Thyroid gland (tissue), 4 donors: ENCODE measurements at regions of chr19 and their contacts with region 1.

Region 1: DNA sequence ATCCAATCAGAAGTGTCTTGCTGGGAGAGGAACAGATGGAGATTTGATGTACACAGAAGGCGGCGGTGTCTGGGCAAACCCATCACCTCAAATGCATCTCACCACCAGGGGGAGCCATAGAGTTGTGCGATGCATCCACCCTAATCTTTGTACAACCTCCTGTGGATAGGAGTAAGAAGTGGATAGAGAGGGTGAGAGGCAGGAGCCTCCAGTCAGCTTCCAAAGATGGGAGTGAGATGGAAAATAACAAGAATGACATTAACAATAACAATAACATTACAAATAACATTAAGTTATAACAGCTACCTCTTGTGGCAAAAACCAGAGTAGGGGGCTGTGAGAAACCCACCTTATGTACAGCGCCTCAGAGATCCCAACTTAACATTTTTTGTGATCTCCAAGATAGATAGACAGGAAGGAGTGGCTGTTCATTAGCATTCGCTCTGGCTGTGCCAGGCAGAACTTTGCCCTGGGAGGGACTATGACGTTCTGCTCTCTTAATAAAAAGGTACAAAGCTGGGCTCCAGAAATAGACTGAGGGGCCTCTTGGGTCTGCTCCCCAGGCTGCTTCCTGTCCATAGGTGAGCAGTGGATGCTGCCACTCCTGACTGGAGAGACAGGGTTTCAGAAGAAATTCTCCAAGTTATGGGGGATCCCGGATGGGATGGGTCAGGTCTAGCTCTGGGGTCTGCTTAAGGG is 5.2 kb upstream of the CEACAM18 start:
- DNase-seq: peak; percentile 62 to 69
- H3K4me3 ChIP-seq: no peak overlapping the region
- H3K27ac ChIP-seq: no peak overlapping the region
- H3K4me1 ChIP-seq: no peaks in the 10 kb centered on the region
- H3K27me3 ChIP-seq: no peaks in the 10 kb centered on the region
- CTCF ChIP-seq: peak; percentile 54 to 93 (median 68)
- POLR2A ChIP-seq: no peak

Region 2: GRCh38 chr19:51111425-51112005 is 361.6 kb before region 1 on chr19:
- intact Hi-C with region 1: no loop called
- DNase-seq: no peak
- H3K4me3 ChIP-seq: no peak overlapping the region
- H3K27ac ChIP-seq: no peak overlapping the region
- H3K4me1 ChIP-seq: peaks cover 10 to 17% of the 10 kb centered on the region in 2 donors
- H3K27me3 ChIP-seq: no peaks in the 10 kb centered on the region
- CTCF ChIP-seq: no peak
- POLR2A ChIP-seq: no peak

Region 3: DNA sequence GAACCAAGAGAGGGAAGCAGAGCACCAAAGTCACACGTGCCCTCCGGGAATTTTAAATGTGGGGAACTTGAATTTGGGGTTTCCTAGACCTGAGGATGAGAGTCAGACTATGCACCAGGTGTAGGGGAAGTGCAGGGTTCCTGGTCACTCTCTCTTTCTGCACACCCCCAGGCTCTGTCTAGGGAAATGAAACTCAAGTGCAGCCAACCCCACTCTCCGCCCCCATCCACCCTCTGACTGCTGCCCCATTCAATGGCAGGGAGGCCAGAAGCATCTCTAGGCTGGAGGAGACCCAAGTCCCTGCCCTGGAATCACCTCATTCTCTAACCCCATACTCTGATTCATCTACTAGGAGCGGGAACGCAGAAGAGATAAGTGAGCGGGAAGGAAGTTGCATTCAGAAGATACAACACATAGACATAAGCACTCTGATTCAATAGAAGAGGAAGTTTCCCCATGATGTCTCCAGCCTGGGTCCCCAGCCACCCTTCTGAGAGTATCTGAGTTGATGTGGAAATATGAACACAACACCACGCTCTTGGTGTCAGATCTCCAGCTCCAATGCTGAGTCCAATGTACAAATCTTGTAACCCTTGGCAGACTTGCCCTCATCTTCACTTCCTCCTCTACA is 178.2 kb after region 1 on chr19:
- intact Hi-C with region 1: loop called (anchors 10 kb)
- DNase-seq: no peak
- H3K4me3 ChIP-seq: no peak overlapping the region
- H3K27ac ChIP-seq: no peak overlapping the region
- H3K4me1 ChIP-seq: no peaks in the 10 kb centered on the region
- H3K27me3 ChIP-seq: no peaks in the 10 kb centered on the region
- CTCF ChIP-seq: no peak
- POLR2A ChIP-seq: no peak

Region 4: DNA sequence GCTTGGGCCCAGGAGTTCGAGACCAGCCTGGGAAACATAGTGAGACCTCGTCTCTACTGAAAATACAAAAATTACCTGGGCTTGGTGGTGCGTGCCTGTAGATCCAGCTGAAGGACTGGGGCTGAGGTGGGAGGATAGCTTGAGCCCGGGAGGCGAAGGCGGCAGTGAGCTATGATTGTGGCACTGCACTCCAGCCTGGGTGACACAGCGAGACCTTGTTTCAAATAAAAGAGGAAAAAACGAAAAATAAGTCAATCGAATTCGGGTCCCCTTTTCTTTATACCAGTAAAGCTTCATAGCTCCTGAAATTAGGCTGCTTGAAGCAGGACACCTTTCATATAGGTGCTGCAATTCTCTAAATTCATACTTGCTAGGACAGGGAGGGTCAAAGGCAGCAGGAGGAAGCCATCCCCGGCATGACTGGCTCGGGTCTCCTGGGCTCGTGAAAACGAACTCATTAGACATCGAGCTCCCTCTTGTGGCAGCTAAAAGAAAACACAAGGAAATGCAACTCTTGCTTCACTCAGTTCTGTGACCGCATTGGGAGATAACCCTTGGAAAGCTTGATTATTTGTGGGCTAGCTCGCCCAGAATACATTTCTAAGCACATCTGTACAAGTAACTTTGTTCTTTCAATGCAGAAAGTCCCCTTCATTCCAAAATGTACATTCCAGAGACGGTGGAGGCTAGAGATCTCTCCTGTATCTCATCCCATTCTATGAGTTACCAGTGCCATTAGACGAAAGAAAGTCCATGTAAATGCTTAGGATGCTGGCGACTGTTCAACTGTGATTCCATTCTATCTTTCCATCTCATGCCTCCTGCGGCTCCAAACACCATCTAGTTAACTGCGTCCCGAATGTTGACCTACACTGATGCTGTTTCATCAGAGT is 304.7 kb after region 1 on chr19:
- intact Hi-C with region 1: loop called (anchors 5 kb)
- DNase-seq: peak; percentile 54 to 58
- H3K4me3 ChIP-seq: no peak overlapping the region
- H3K27ac ChIP-seq: no peak overlapping the region
- H3K4me1 ChIP-seq: no peaks in the 10 kb centered on the region
- H3K27me3 ChIP-seq: no peaks in the 10 kb centered on the region
- CTCF ChIP-seq: peak in 5 of 6 experiments; percentile 44 to 72 (median 61)
- POLR2A ChIP-seq: no peak